Activated CD4-positive, alpha-beta memory T cell treated with anti-CD3 and anti-CD28 coated beads for 36 hours (primary cell): ENCODE measurements at regions of chrX and their contacts with region 1.

Region 1: DNA sequence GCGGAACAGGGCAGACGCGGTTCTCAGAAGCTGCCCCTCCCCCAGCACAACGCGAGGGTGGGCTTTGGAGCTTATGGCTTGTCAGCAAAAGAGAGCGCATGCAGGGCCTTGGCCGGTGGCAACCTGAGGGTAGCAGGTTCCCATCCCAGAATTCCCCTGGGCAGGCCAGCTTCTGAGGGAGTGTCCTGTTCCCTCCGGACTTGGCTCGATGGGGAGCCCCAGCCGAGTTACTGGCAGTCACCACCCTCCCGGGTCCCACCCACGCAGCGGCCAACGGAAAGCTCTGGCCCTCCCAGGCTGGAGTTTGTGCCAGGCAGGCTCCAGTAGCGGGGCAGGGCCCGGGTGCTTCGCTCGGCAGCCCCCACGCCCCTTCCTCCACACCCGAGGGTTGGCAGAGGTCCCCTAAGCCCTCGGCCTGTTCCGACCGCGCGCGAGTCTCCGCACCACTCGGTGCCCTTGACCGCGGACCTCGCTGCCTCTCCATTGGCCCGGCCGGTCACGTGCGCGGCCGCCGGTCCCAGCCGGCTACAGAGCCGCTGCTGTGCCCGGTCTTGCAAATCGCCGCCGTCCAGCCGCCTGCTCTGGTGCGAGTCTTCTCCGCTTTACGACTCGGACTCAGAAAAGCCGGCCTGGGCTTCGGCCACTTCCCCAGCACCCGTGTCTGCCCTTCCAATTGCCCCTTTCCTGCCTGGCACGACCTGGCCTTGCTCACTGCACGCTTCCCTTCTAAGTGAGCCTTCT is 20.9 kb upstream of the MTM1 start:
- DNase-seq: peak; percentile 46
- H3K4me3 Mint-ChIP-seq: peak overlapping the region; percentile 60
- H3K27ac Mint-ChIP-seq: peak overlapping the region; percentile 33
- H3K4me1 Mint-ChIP-seq: peaks cover 26% of the 10 kb centered on the region
- H3K27me3 Mint-ChIP-seq: no peaks in the 10 kb centered on the region

Region 2: DNA sequence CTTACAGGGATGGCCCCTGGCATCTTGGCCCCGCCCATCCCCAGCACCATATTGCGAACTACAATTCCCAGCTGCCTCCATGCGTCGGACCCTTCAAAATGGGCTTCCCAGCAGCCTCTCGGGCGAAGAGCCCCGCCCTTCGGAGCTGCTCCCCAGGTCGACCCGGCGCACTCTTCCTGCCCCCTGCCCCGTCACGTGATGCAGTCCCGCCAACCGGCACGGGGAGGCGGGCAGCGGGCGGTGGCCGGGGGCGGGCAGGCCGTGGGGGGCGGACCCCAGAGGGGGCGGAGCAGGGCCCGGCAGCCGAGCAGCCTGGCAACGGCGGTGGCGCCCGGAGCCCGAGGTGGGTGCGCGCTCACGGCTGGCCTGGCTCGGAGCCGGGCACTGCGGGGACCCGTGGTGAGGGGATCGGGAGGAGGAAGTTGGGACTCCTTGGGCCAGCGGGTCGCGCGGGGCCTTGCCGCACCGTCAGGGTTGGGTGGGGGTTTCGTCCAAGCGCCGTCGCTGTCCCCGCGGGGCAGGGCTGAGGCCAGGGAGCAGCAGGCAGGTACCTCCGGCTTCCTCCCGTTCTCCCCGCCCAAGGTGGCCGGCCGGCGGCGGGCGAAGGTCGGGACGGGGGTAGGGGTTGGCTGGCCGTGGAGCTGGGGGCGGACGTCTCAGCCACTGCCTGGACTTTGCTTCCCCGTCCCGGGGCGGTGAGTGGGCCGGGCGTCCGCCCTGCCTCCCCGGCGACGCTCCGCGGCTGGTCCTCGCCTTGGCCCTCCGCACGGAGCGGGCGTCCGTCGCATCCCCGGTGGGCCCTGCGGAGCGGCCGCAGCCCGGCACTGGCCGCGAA is 21.0 kb after region 1 on chrX and contains the start of gene MTM1:
- CTCF ChIA-PET with region 1: interaction called, 3 read pairs
- POLR2A ChIA-PET with region 1: interaction called, 4 read pairs
- intact Hi-C with region 1: loop called (anchors 1 kb)
- DNase-seq: peak; percentile 95
- H3K4me3 Mint-ChIP-seq: peak within 1 kb of the TSS; percentile 77
- H3K27ac Mint-ChIP-seq: peak within 1 kb of the TSS; percentile 87
- H3K4me1 Mint-ChIP-seq: peaks cover 39% of the 10 kb centered on the region
- H3K27me3 Mint-ChIP-seq: no peaks in the 10 kb centered on the region
- total RNA-seq, gene MTM1: 24.4 to 24.6 TPM

Region 3: DNA sequence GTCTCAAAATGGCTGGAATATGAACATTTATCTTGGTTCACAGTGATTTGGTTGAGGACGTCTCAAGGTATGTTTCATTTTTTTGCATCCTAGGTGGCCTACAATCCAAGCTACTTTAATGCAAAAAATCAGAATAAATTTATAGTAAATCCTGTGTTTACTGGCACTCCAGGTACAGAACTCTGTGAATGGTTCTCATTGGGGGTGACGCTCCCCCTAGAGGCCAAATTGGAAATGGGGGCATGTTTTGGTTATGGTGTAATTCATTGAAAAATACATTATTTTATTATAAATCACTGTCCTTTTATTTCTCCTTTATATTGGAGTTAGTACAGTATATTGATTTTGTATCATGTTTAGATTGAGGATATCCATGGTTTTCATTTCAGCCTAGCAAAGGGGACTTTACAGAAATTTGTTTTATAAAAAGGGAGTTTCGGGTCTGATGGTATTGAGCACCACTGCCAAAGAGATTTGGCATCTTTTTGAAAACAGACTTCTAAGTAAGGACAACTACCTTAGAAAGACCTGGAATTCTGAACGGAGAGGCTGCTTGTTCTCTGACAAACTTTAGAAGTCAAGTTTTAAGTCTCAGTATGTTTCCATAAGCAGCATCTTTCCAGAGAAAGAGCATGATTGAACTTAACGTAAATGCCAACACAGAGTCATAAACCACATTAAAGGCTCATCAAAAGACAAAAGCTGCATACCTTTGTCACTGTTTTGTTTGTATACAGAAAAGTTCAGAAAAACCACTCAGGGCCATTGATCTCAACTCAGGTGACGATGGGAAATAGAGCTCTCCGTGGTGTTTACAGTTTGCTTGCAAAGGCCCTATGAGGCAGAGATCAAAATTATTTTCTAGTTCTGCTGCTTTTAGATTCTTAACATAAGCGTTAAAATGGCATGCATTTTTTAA is 40.3 kb after region 1 on chrX:
- CTCF ChIA-PET with region 1: interaction called, 4 read pairs
- POLR2A ChIA-PET with region 1: no interaction called
- intact Hi-C with region 1: loop called (anchors 5 kb)
- DNase-seq: peak; percentile 46
- H3K4me3 Mint-ChIP-seq: no peak overlapping the region
- H3K27ac Mint-ChIP-seq: no peak overlapping the region
- H3K4me1 Mint-ChIP-seq: peaks cover 39% of the 10 kb centered on the region
- H3K27me3 Mint-ChIP-seq: no peaks in the 10 kb centered on the region

Region 4: DNA sequence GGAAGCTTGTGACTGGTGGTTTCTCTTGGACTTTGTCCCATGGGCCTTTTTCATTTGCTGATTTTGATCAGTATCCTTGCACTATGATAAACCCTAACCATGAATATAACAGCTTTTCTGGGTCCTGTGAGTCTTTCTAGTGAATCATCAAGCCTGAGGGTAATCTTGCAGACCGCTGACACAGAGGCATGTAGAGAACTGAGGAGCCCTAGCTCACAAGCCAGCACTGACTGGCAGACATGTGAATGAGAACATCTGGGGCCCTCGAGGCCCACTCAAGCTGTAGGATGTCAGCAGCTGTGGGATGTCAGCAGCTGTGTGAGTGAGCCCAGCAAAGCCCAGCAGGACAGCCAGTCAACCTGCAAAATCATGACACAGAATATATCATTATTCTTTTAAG is 472.3 kb after region 1 on chrX:
- CTCF ChIA-PET with region 1: no interaction called
- POLR2A ChIA-PET with region 1: no interaction called
- intact Hi-C with region 1: no loop called
- DNase-seq: no peak
- H3K4me3 Mint-ChIP-seq: no peak overlapping the region
- H3K27ac Mint-ChIP-seq: no peak overlapping the region
- H3K4me1 Mint-ChIP-seq: no peaks in the 10 kb centered on the region
- H3K27me3 Mint-ChIP-seq: no peaks in the 10 kb centered on the region

Region 5: DNA sequence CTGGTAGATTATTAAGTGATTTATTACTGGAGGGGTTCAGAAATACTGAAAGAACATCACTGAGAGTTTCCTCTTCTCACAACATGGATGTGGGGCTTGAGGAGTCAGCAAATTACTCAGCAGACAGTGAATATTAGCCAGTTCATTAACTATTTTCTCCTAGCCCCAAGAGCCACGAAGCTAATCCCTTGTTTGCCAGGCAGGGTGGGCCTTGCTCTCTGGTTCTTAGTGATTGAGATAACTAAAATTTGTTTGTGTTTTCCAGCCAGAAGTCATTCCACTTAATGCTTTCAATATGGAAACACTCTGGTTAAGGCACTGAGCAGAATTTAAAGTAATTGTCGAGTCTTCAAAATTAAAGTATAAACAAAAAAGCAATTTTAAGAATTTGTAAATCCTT is 975.8 kb after region 1 on chrX:
- CTCF ChIA-PET with region 1: no interaction called
- POLR2A ChIA-PET with region 1: no interaction called
- intact Hi-C with region 1: no loop called
- DNase-seq: no peak
- H3K4me3 Mint-ChIP-seq: no peak overlapping the region
- H3K27ac Mint-ChIP-seq: no peak overlapping the region
- H3K4me1 Mint-ChIP-seq: no peaks in the 10 kb centered on the region
- H3K27me3 Mint-ChIP-seq: no peaks in the 10 kb centered on the region